HCT116 (cell line): ENCODE measurements at regions of chr3 and their contacts with region 1.

Region 1: DNA sequence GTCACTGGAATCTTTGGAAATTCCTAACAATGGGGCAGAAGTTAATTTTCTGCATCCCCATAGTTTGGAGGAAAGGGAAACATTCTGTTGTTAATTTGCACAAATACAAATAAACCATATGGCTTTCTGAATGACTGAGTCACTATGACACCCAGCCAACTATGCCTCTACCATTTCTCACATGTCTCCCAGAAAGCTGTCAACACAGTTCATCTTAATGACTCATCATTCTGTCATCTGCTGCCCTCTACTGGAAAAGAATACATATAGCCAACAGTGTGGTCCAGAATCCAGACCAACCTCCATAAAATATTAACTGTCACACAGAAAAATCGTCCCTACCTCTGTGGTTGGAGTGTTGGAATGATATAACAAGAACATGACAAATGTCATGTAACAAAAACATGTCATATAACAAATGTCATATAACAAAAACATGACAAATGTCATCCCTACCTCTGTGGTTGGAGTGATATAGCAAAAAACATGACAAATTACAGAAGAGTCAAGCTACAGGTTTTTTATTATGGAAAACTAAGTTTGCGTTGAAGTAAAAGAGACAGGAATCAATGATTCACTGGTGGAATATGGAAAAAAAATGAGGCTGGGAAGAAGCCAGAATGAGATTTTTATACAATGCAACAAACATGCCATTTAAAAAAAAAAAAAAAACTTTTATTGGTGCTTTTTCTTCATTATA is 47.7 kb upstream of the GYG1 start:
- DNase-seq: peak; percentile 66
- ATAC-seq: peak; percentile 80
- H3K4me3 ChIP-seq: no peak overlapping the region
- H3K27ac ChIP-seq: no peak overlapping the region
- H3K4me1 ChIP-seq: peaks cover 0 to 6% of the 10 kb centered on the region in 2 experiments; a peak in 2 of 4 replicates
- H3K27me3 ChIP-seq: no peaks in the 10 kb centered on the region
- CTCF ChIP-seq: peak; percentile 65 to 83 (median 80)
- POLR2A ChIP-seq: no peak
- RAD21 ChIP-seq: peak; percentile 90

Region 2: GRCh38 chr3:148459931-148460513 is 483.6 kb before region 1 on chr3:
- CTCF ChIA-PET with region 1: no interaction called
- POLR2A ChIA-PET with region 1: no interaction called
- RAD21 ChIA-PET with region 1: no interaction called
- intact Hi-C with region 1: loop called (anchors 10 kb)
- DNase-seq: peak; percentile 6
- ATAC-seq: no peak
- H3K4me3 ChIP-seq: no peak overlapping the region
- H3K27ac ChIP-seq: no peak overlapping the region
- H3K4me1 ChIP-seq: no peaks in the 10 kb centered on the region
- H3K27me3 ChIP-seq: no peaks in the 10 kb centered on the region
- CTCF ChIP-seq: peak; percentile 31 to 67 (median 31); a peak in 4 of 6 replicates
- POLR2A ChIP-seq: no peak
- RAD21 ChIP-seq: peak; percentile 73

Region 3: DNA sequence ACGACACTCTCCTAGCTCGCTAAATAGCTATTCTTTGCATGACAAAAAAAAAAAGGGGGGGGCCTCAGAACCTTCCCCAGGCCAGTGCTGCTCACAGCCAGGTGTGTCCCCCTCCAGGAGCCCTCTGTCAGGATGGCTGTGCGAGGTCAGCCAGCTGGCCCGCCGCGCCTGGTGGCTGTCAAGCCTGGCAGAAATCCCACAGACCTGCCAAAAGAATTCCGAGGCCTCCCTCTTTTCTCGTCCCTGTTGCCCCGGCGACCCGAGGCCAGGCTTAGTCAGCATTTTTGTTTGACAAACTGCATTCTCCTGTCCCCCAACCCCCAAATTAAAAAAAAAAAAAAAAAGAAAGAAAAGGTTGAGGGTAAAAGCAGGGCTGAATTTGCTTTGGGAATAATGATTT is 592.8 kb after region 1 on chr3:
- CTCF ChIA-PET with region 1: no interaction called
- POLR2A ChIA-PET with region 1: no interaction called
- RAD21 ChIA-PET with region 1: no interaction called
- intact Hi-C with region 1: no loop called
- DNase-seq: no peak
- ATAC-seq: no peak
- H3K4me3 ChIP-seq: no peak overlapping the region
- H3K27ac ChIP-seq: no peak overlapping the region
- H3K4me1 ChIP-seq: peaks cover 0 to 9% of the 10 kb centered on the region in 2 experiments; a peak in 1 of 4 replicates
- H3K27me3 ChIP-seq: no peaks in the 10 kb centered on the region
- CTCF ChIP-seq: no peak
- POLR2A ChIP-seq: no peak
- RAD21 ChIP-seq: no peak